WTC11 (cell line): ENCODE measurements at regions of chr14 and their contacts with region 1.

Region 1: DNA sequence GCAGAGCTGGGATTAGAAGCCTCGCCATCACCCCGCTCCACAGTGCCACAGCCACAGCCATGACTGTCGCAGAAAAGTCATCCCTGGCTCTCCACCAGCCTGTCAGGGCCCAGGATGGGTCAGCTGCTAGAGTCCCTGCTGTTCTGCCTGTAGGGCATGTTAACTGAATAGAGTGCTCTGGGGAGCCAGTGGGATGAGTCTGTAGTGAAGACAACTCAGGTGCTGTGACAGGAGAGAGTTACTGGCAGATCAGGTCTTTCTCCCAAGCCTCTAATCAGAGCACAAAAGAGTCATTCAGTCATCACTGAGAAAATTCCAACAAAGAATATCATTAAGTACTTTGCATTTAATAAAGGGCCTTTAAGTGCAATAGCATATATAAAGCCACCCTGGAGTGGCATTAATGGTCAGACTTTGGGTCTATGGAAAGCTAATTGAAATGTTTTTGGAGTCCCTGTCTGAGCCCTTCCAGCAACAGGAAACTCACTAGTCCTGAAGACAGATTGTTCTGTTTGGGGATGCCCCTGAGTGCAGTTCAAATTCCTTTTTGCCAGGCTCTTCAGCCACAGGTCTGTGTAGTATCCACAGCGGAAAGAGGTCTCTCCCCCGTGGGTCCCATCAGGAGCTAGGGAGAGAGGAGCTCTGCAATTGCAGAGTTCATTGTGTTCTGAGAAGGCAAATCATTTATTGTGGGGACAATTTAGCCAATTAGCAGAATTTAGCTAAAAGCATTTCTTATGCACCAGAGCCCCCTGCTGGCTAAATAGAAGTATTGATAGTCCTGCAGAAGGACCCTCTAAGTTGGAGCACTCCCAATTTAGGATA is 45.2 kb upstream of the C14orf132 start:
- DNase-seq: no peak
- ATAC-seq: peak; percentile 79
- H3K4me3 Mint-ChIP-seq: no peak overlapping the region
- H3K27ac Mint-ChIP-seq: peak overlapping the region; percentile 74; the same call in 1 of the 2 replicates
- H3K4me1 Mint-ChIP-seq: peaks cover 19% of the 10 kb centered on the region
- H3K27me3 Mint-ChIP-seq: peaks cover 9% of the 10 kb centered on the region
- CTCF ChIP-seq: peak; percentile 89

Region 2: GRCh38 chr14:95561001-95561412 is 433.0 kb before region 1 on chr14:
- CTCF ChIA-PET with region 1: interaction called, 38 read pairs
- POLR2A ChIA-PET with region 1: interaction called, 4 read pairs
- DNase-seq: peak; percentile 96
- ATAC-seq: peak; percentile 89
- H3K4me3 Mint-ChIP-seq: no peak overlapping the region
- H3K27ac Mint-ChIP-seq: no peak overlapping the region
- H3K4me1 Mint-ChIP-seq: peaks cover 36% of the 10 kb centered on the region
- H3K27me3 Mint-ChIP-seq: peaks cover 35% of the 10 kb centered on the region
- CTCF ChIP-seq: peak; percentile 96

Region 3: DNA sequence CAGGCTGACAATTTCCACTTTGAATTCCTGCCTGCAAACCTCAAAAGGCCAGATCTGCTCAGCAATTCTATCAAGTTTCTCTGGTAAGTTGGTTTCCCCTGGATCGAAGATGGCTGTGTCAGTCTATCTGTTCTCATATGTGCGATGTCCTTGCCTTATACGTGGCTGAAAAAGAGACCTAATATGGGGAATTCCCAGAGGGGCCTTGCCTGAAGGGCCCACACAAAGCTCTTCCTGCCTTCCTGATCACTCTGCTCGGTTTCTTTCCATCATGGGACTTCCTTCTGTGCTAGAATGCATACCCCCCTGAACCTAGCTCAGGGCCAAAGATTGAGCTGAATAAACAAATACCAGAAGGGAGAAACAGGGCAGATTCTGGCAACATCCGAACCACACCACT is 294.6 kb before region 1 on chr14:
- CTCF ChIA-PET with region 1: interaction called, 18 read pairs
- POLR2A ChIA-PET with region 1: no interaction called
- DNase-seq: no peak
- ATAC-seq: peak; percentile 20; the same call in 1 of the 2 replicates
- H3K4me3 Mint-ChIP-seq: peak overlapping the region; percentile 27; the same call in 1 of the 2 replicates
- H3K27ac Mint-ChIP-seq: no peak overlapping the region
- H3K4me1 Mint-ChIP-seq: peaks cover 50% of the 10 kb centered on the region
- H3K27me3 Mint-ChIP-seq: peaks cover 100% of the 10 kb centered on the region
- CTCF ChIP-seq: no peak

Region 4: GRCh38 chr14:95871300-95871900 is 122.6 kb before region 1 on chr14:
- CTCF ChIA-PET with region 1: interaction called, 42 read pairs
- POLR2A ChIA-PET with region 1: no interaction called
- DNase-seq: no peak
- ATAC-seq: no peak
- H3K4me3 Mint-ChIP-seq: no peak overlapping the region
- H3K27ac Mint-ChIP-seq: no peak overlapping the region
- H3K4me1 Mint-ChIP-seq: peaks cover 28% of the 10 kb centered on the region
- H3K27me3 Mint-ChIP-seq: peaks cover 14% of the 10 kb centered on the region
- CTCF ChIP-seq: no peak

Region 5: DNA sequence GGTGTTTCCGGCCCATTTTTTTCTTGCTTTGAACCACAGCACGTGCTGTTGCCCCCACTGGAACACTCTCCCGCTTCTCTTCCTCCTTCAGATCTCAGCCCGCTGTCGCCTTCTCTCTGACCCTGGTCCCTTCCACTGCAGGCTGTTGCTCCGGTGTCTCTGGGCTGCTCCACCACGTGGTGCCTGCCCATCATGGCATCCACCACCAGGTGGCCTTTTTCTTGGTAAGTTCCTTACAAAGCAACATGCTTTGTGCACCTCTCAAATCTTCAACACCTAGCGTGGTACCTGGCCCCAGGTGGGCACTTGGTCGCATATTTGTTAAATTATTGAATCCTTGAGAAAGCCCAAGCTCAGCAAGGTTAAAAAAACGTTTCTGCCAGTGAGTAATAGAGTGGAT is 98.3 kb before region 1 on chr14:
- CTCF ChIA-PET with region 1: interaction called, 38 read pairs
- POLR2A ChIA-PET with region 1: no interaction called
- DNase-seq: peak; percentile 68
- ATAC-seq: peak; percentile 81
- H3K4me3 Mint-ChIP-seq: no peak overlapping the region
- H3K27ac Mint-ChIP-seq: no peak overlapping the region; the same call in 1 of the 2 replicates
- H3K4me1 Mint-ChIP-seq: peaks cover 57% of the 10 kb centered on the region
- H3K27me3 Mint-ChIP-seq: no peaks in the 10 kb centered on the region
- CTCF ChIP-seq: peak; percentile 45; the same call in 1 of the 2 replicates

Region 6: GRCh38 chr14:95948558-95948981 is 45.4 kb before region 1 on chr14:
- CTCF ChIA-PET with region 1: interaction called, 10 read pairs
- POLR2A ChIA-PET with region 1: no interaction called
- DNase-seq: peak; percentile 75
- ATAC-seq: peak; percentile 83
- H3K4me3 Mint-ChIP-seq: peak overlapping the region; percentile 19
- H3K27ac Mint-ChIP-seq: peak overlapping the region; percentile 98
- H3K4me1 Mint-ChIP-seq: peaks cover 76% of the 10 kb centered on the region
- H3K27me3 Mint-ChIP-seq: no peaks in the 10 kb centered on the region
- CTCF ChIP-seq: no peak